PC-3 (cell line): ENCODE measurements at regions of chr3 and their contacts with region 1.

Region 1: GRCh38 chr3:159884661-159885402 is 103.8 kb upstream of the IL12A start:
- DNase-seq: peak; percentile 78
- ATAC-seq: peak; percentile 36
- H3K4me3 ChIP-seq: no peak overlapping the region
- H3K27ac ChIP-seq: no peak overlapping the region
- H3K4me1 ChIP-seq: peaks cover 19% of the 10 kb centered on the region
- H3K27me3 ChIP-seq: no peaks in the 10 kb centered on the region
- CTCF ChIP-seq: peak; percentile 83

Region 2: DNA sequence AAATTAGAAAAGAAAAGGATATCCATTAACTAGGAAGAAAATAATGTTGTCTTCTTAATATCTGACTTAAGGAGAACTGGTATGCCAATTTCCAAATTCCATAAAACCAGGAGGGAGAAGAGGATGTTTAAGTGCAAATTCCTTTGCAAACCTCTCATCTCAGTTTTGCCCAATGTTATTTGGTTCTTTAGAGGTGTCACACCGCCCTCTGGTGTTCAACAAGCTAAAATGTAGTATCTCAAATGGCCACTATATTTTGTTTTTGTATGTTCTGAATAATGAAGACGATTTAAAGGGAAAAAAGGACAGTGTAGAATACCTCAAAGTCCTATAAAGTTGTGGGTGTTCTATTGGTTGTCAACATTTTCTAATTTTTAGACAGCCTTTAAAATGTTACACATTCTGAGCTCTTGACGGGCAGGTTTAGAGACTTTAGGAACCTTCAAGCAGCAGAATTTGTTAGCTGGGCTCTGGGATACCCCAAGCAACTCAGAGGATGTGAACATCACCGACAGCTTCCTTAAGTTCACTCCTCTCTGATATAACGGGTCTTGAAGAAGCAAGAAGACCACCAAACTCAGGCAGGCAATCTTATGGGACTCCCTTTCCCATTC is 624.7 kb before region 1 on chr3:
- CTCF ChIA-PET with region 1: no interaction called
- POLR2A ChIA-PET with region 1: no interaction called
- intact Hi-C with region 1: loop called (anchors 10 kb)
- DNase-seq: peak; percentile 81
- ATAC-seq: peak; percentile 61
- H3K4me3 ChIP-seq: no peak overlapping the region
- H3K27ac ChIP-seq: no peak overlapping the region
- H3K4me1 ChIP-seq: no peaks in the 10 kb centered on the region
- H3K27me3 ChIP-seq: no peaks in the 10 kb centered on the region
- CTCF ChIP-seq: peak; percentile 90

Region 3: DNA sequence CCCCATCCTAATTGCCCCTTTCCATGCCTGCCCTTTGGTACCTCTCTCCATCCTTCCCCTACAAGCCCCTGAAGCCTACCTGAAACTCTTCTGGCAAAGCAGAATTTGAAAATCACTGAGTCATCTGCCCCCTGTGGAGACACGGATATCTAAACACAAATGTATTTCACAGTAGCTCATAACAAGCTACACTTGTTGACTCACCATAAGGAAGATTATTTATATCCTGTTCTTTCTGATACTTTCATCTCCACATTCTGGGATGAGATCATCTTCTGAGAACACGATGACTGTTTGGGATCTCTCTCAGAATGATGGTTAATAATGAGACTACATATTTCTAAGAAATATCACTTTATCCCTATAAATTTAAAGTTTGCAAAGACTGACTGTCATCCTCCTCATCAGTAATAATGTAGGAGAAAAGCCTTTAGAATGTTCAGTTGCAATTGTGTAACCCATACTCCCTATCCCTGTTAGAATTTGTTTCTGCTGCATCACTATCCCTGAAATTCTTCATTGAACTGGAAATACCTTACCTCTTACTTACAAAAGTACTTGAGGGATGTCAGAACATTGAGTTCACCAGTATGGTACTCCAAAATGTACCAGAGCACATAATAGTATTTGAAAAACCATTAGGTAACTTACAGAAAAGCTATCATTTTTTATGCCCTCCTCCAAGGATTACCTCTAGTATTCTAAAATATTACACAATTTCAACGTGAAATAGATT is 12.3 kb before region 1 on chr3:
- CTCF ChIA-PET with region 1: interaction called, 8 read pairs
- POLR2A ChIA-PET with region 1: interaction called, 3 read pairs
- intact Hi-C with region 1: loop called (anchors 1 kb)
- DNase-seq: peak; percentile 92
- ATAC-seq: peak; percentile 95
- H3K4me3 ChIP-seq: no peak overlapping the region
- H3K27ac ChIP-seq: peak overlapping the region; percentile 61
- H3K4me1 ChIP-seq: peaks cover 30% of the 10 kb centered on the region
- H3K27me3 ChIP-seq: no peaks in the 10 kb centered on the region
- CTCF ChIP-seq: peak; percentile 50

Region 4: DNA sequence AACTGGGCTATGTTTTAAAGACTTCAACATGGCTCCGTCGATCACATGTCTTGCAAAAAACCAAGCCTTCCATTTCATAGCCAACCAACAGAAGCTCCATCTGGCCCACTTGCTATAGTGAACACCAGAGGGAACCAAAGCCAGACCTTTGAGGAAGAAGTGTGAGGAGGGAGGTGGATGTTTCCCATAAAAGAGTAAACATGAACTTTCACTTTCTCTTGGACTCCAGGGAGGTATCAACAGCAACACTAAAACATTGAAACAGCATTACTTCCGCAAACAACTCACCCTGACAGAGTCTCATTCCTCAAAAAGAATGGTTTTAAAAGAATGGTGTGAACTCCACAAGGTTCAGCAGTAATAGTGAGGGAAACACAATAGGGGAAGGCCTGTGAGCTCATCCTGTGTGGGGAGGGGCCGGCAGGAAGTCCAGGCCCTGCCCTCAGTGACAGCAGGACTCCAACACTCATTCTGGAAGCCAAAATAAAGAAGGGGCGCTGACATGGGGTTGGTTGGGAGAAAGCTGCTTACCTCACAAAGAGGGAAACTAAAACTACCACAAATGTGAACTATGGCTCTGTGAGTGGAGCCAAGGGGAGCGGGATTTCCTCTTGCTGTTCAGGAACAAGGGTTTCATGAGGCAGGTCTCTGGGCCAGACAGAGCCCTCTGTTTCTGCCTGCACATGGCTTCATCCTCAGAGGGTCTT is 44.8 kb after region 1 on chr3:
- CTCF ChIA-PET with region 1: interaction called, 12 read pairs
- POLR2A ChIA-PET with region 1: no interaction called
- intact Hi-C with region 1: loop called (anchors 1 kb)
- DNase-seq: peak; percentile 81
- ATAC-seq: peak; percentile 46
- H3K4me3 ChIP-seq: peak overlapping the region; percentile 6; the same call in 1 of the 2 replicates
- H3K27ac ChIP-seq: peak overlapping the region; percentile 88
- H3K4me1 ChIP-seq: peaks cover 32% of the 10 kb centered on the region
- H3K27me3 ChIP-seq: no peaks in the 10 kb centered on the region
- CTCF ChIP-seq: peak; percentile 70

Region 5: DNA sequence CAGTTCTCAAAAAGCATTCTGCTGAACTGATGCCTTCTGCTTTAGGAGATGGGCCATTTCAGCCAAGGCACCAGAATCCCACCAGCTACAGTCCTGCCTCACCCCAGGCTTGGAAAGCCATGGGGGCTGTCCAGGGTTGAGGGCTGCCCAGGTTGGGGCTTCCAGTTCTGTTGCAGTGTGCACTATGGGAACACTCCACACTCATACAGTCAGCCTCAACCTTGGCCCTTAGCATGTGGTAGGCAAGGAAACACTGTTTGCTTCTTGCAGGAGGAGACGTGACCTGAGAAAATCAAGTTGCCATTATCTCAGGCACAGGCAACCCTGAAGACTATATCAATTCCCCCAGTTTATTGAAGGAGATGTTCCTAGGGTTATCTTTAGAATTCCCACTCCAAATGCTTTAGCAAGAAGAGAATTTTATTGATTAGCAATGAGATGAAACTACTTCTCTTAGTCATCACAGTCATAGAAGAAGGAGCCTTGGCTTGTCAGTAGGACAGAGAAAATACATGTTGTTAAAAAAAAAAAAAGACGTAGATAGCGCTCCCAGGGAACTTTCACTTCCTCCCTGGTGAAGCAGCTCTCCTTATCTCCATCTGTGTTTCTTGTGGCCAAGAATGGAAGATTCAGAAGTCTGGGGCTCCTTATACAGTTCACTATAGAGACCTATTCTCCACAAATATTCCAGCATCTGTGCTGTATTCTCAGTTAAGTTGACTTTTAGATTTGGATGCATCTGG is 65.5 kb after region 1 on chr3:
- CTCF ChIA-PET with region 1: no interaction called
- POLR2A ChIA-PET with region 1: no interaction called
- intact Hi-C with region 1: no loop called
- DNase-seq: no peak
- ATAC-seq: no peak
- H3K4me3 ChIP-seq: no peak overlapping the region
- H3K27ac ChIP-seq: no peak overlapping the region
- H3K4me1 ChIP-seq: no peaks in the 10 kb centered on the region
- H3K27me3 ChIP-seq: no peaks in the 10 kb centered on the region
- CTCF ChIP-seq: no peak

Region 6: DNA sequence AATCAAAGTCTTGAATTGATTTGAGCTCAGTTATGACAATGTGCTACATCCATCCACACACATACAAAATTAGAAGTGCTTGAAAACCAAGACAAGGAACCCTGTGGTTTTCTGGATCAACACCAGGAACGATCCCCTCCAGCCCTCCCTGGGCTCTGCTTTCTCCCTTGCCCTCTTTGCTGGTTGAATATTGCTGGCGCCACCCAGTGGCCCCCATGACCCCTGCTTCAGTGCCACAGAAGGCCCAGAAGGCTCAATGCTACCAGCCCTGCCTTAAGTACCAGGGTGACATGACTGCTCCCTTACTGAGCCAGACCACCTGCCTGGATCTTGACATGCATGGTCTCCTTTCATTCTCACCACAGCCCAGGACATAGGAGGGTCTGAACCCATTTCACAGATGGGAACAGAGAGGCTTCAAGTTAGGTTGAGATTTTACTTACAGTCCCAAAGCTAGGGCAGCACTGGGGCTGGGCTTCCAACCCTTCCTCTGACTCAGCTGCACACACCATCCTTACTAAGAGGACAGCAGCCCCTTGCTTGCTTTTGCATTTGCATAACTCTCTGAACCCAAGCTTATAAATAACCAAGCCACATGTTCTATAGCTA is 118.8 kb after region 1 on chr3:
- CTCF ChIA-PET with region 1: interaction called, 25 read pairs
- POLR2A ChIA-PET with region 1: interaction called, 10 read pairs
- intact Hi-C with region 1: loop called (anchors 1 kb)
- DNase-seq: peak; percentile 78
- ATAC-seq: peak; percentile 82
- H3K4me3 ChIP-seq: no peak overlapping the region
- H3K27ac ChIP-seq: no peak overlapping the region
- H3K4me1 ChIP-seq: no peaks in the 10 kb centered on the region
- H3K27me3 ChIP-seq: no peaks in the 10 kb centered on the region
- CTCF ChIP-seq: peak; percentile 87